Common myeloid progenitor, CD34-positive (primary cell): ENCODE measurements at regions of chr14 and their contacts with region 1.

Region 1: DNA sequence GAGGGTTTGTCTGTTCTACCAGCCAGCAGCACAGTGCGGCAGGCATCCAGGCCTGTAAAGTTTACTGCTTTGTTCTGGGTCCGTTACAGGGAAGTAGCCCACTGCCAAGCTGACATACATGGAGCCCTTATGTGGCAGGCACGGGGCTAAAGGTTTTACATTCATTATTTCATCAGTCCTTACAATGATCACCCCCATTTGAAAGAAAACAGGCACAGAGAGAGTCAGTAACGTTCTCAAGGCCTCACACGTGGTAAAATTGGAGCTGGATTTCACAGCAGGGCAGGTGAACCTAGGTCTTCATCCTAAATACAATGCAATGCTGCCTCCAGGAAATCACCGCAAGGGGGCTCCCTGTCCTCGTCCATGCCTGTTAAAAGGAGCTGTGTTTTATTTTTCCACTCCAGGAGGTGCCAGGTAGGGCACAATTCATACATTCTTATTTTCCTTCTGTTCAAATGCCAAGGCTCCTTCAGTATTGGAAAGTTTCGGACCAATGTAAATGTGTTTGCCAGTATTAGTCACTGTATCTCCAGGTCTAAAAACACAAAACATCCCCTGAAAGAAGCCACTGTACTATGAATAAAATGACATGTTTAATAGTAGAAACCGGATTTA is 172.2 kb upstream of the GZMB start:
- DNase-seq: peak; percentile 51 to 81 (median 75)
- H3K4me3 ChIP-seq: no peak overlapping the region
- H3K27ac ChIP-seq: no peak overlapping the region
- H3K4me1 ChIP-seq: no peaks in the 10 kb centered on the region
- H3K27me3 ChIP-seq: no peaks in the 10 kb centered on the region

Region 2: DNA sequence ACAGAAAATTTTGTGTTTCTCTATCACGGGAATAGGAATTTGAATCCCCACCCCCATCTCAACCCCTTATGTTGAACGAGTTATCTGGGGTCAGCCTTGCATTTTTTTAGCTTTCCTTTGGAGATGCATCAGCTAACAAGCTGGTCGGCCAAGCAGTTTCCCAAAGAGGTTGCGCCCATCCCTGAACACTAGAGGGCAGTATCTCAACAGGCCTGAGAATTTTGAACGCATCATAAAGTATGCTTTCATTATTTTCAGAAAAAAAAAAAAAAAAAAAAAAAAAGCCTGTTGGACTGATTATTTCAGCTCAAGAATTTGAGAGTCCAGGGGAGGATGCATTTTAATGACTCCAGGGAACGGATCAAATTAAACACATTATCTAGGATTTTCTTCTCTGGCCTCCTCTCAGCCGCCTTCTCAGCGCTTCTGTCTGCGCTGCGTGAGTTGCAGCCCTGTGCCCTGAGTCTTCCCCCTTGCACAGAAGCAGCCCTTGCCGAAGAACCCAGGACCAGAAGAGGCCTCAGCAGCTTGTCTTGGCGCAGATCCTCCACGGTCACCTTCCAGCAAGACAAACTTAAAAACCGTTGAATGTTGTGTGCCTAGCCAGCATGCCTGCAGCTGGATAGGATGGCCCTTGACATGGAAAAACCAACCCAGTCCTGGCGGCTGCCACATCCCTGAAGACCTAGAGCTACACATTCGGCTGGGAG is 95.6 kb before region 1 on chr14:
- CTCF ChIA-PET with region 1: interaction called, 17 read pairs
- POLR2A ChIA-PET with region 1: interaction called, 4 read pairs
- DNase-seq: peak; percentile 61 to 81 (median 75)
- H3K4me3 ChIP-seq: no peak overlapping the region
- H3K27ac ChIP-seq: no peak overlapping the region
- H3K4me1 ChIP-seq: no peaks in the 10 kb centered on the region
- H3K27me3 ChIP-seq: no peaks in the 10 kb centered on the region

Region 3: DNA sequence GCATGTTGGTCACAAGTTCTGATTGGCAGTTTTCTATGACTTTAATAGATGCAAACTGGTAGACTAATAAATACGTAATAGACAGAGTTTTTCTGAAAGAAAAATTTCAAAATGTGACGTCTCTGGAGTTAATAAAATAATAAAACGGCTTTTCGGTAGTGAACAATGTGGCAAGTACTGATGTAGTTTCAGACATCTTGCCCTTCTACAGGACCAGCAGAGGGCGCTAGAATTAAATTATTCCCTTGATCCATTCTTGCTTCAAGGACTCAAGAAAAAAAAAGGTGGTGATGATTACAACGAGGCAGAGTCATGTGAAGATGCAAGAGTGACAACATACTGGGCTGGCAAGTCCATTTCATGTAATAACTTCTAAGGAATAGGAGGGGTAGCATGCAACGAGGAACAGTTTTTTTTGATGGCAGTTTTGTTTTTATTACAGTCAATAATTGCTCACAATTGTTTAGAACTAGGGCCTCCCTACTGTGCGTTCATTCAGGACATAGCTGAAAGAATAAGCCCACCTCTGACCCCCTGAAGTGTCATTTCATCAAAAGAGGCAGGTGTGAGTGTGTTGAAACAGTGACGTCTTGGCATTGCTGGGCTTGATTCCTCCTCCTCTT is 71.2 kb before region 1 on chr14:
- CTCF ChIA-PET with region 1: interaction called, 11 read pairs
- POLR2A ChIA-PET with region 1: no interaction called
- DNase-seq: peak; percentile 83 to 91 (median 87)
- H3K4me3 ChIP-seq: no peak overlapping the region
- H3K27ac ChIP-seq: no peak overlapping the region
- H3K4me1 ChIP-seq: no peaks in the 10 kb centered on the region
- H3K27me3 ChIP-seq: no peaks in the 10 kb centered on the region

Region 4: GRCh38 chr14:24817212-24818057 is 11.3 kb after region 1 on chr14:
- CTCF ChIA-PET with region 1: interaction called, 12 read pairs
- POLR2A ChIA-PET with region 1: no interaction called
- DNase-seq: peak in 2 of 3 donors; percentile 46 to 63
- H3K4me3 ChIP-seq: no peak overlapping the region
- H3K27ac ChIP-seq: no peak overlapping the region
- H3K4me1 ChIP-seq: peaks cover 0 to 20% (median 16%) of the 10 kb centered on the region in 4 experiments
- H3K27me3 ChIP-seq: no peaks in the 10 kb centered on the region

Region 5: DNA sequence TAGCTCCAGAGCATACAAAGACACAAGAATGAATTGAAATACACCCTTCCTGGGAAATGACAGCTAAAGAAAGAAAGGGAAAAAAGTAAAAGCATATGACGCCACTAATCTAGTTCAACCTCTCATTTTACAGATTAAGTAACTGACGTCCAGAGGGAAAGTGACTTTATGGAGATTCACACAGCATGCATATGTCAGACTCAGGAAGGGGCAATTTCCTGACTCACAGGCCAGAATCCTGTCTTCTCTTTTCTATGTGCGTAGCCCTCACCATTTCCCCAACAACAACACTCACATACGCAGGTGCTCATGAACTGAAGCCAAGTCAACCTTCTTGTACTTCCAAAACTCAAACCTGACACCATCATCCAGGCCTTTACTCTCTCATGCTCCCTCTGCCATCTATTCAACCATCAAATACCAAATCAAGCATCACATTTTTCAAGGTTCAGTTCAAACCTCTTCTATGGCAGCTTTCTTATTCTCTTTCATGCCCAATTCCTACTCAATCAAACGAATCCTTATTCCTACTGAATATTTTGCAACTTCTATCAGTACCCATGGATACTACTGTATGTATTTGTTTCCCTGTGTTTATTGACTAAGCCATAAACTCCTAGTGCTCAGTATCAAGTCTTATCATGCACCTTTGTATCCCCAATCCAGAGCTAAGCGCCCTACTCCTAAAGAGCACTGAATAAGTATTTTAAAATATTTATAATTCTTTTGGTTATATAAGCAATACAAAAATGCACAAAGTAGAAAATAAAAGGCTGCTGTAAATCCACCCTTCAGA is 191.0 kb after region 1 on chr14:
- CTCF ChIA-PET with region 1: no interaction called
- POLR2A ChIA-PET with region 1: no interaction called
- DNase-seq: no peak
- H3K4me3 ChIP-seq: no peak overlapping the region
- H3K27ac ChIP-seq: no peak overlapping the region
- H3K4me1 ChIP-seq: peaks cover 0 to 4% (median 0%) of the 10 kb centered on the region in 4 experiments
- H3K27me3 ChIP-seq: no peaks in the 10 kb centered on the region

Region 6: DNA sequence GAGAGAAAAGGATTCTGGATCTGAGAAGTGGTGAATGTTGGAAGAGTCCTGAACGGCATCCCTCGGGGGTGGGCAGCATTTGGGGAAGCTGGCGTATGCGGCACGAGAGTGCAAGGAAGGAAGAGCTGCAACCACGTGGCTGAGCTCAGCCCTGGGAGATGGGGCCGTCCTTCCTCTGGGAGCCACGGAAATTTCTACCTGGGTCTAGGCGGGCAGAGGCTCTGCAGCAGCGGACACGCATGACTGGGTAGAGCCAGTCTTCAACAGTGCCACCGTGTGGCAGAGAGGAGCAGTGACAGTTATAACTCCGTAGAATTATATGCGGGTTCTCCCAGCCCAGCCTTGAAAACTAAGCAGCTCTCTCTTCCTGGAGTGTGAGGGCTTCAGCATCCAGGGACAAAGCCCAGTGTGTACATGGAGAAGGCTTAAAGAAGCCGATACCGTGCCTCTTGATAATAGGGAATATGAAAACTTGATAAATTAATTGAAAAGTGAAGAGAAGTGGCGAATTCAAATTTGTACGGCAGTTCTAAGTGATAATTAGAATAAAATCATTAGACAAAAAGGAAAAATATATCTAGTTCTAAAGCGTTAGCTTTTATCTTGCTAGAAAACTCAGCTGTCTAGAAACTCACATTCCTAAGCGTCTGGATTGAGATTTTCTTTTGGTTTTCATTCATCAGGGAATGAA is 326.7 kb after region 1 on chr14:
- CTCF ChIA-PET with region 1: interaction called, 46 read pairs
- POLR2A ChIA-PET with region 1: no interaction called
- DNase-seq: peak; percentile 54 to 71 (median 71)
- H3K4me3 ChIP-seq: peak overlapping the region in 2 of 7 experiments; percentile 14 to 40
- H3K27ac ChIP-seq: no peak overlapping the region
- H3K4me1 ChIP-seq: peaks cover 0 to 6% (median 2%) of the 10 kb centered on the region in 4 experiments
- H3K27me3 ChIP-seq: peaks cover 3 to 41% (median 7%) of the 10 kb centered on the region in 5 experiments

Region 7: DNA sequence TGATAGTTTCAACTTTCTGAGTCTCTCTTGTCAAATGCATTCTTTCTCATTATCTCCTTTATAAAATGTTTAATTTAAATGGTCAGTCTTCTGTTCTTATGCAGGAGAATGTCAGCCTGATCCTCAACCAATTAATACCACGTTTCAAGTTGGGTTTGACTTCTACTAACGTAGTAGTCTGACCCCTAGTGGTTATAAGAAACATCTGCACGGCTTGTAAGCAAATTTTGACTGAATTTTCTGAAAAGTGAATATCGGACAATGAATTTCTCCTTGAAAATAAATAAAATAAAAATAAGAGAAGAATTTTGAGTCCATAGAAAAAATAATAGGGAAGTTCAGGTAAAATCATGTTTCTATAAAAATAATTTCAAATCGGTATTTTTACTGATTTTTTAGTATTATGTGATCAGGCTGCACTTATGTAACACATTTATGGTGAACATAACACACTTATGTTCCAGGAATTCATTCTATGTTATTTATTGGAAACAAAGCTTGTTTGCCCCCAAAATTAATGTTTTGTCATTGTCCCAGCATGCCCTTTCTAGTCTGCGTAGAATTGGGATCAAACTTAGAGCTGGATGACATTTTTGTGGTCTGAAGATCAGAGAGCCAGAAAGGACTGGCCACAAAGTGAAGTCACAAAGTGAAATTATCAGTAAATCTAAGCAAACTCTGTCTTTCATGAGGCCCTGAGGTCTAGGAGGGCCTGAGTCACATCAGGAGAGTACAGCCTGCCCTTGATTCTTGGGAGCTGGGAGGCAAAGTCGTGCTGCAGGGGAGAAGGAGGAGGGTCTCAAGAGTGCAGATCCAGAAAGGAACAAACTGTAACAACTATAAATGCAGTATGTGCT is 345.0 kb after region 1 on chr14:
- CTCF ChIA-PET with region 1: interaction called, 11 read pairs
- POLR2A ChIA-PET with region 1: no interaction called
- DNase-seq: peak; percentile 37 to 61 (median 54)
- H3K4me3 ChIP-seq: no peak overlapping the region
- H3K27ac ChIP-seq: no peak overlapping the region
- H3K4me1 ChIP-seq: no peaks in the 10 kb centered on the region
- H3K27me3 ChIP-seq: no peaks in the 10 kb centered on the region